B cell (primary cell): ENCODE measurements at regions of chr3 and their contacts with region 1.

Region 1: DNA sequence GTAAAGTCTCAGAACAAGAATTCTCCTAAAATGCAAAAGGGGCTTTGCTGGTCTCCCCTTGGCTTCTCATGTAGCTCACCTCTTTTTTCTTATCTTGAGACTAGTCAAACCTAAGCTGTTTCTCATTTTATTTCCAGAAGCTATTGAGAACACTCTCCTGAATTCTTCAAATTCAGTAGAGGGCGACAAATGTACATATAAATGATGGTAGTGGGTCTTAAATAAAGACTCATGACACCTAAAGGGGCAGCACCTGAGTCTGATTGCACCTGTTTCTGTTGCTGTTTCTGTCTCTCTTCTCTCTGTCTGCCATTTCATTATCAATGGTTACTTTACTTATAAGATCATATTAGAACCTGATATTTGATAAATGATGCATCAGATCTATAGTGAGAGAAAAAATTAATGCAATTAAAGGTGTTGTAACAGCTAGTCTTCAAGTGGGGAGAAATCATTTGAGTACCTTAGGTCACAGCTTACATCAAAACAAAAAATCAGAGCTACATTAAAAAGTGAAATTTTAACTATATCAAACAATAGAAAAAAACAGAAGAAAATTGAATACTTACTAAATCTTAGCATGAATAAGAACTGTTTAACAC is 7.0 kb downstream of the ADIPOQ start:
- DNase-seq: peak; percentile 81
- ATAC-seq: peak; percentile 88
- H3K4me3 ChIP-seq: no peak overlapping the region
- H3K4me3 Mint-ChIP-seq: no peak overlapping the region
- H3K27ac ChIP-seq: no peak overlapping the region
- H3K27ac Mint-ChIP-seq: no peak overlapping the region
- H3K4me1 ChIP-seq: peaks cover 9 to 11% of the 10 kb centered on the region in 2 donors
- H3K4me1 Mint-ChIP-seq: peaks cover 13% of the 10 kb centered on the region
- H3K27me3 ChIP-seq: no peaks in the 10 kb centered on the region
- H3K27me3 Mint-ChIP-seq: peaks cover 16% of the 10 kb centered on the region
- CTCF ChIP-seq: peak; percentile 70

Region 2: GRCh38 chr3:186915806-186916796 is 66.6 kb after region 1 on chr3:
- CTCF ChIA-PET with region 1: interaction called, 12 read pairs
- POLR2A ChIA-PET with region 1: interaction called, 3 read pairs
- intact Hi-C with region 1: no loop called
- DNase-seq: peak; percentile 36
- ATAC-seq: peak; percentile 79
- H3K4me3 ChIP-seq: peak overlapping the region in 1 of 5 experiments; percentile 18
- H3K4me3 Mint-ChIP-seq: peak overlapping the region; percentile 64
- H3K27ac ChIP-seq: no peak overlapping the region
- H3K27ac Mint-ChIP-seq: peak overlapping the region; percentile 77
- H3K4me1 ChIP-seq: peaks cover 11 to 14% of the 10 kb centered on the region in 2 donors
- H3K4me1 Mint-ChIP-seq: peaks cover 33% of the 10 kb centered on the region
- H3K27me3 ChIP-seq: no peaks in the 10 kb centered on the region
- H3K27me3 Mint-ChIP-seq: no peaks in the 10 kb centered on the region
- CTCF ChIP-seq: no peak

Region 3: DNA sequence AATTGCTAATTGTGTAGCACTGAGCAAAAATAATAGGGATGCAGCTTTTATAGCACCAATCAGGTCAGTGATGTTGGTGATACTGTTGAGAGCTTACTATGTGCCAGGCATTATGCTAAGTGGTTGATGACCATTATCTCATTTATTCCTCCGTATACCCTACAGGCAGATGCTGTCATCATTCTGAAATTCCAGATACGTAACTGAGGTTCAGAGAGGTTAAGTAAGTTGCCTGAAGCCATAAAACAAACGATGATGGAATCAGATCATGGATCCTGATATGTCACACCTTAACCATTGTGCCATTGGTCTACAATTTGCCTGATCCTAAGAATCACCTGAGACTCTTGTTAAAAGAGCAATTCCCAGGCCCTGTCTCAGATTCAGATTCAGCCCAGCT is 130.4 kb after region 1 on chr3:
- CTCF ChIA-PET with region 1: interaction called, 10 read pairs
- POLR2A ChIA-PET with region 1: no interaction called
- intact Hi-C with region 1: no loop called
- DNase-seq: no peak
- ATAC-seq: no peak
- H3K4me3 ChIP-seq: no peak overlapping the region
- H3K4me3 Mint-ChIP-seq: no peak overlapping the region
- H3K27ac ChIP-seq: peak overlapping the region in 1 of 2 donors; percentile 34
- H3K27ac Mint-ChIP-seq: peak overlapping the region; percentile 81
- H3K4me1 ChIP-seq: peaks cover 19 to 40% of the 10 kb centered on the region in 2 donors
- H3K4me1 Mint-ChIP-seq: peaks cover 63% of the 10 kb centered on the region
- H3K27me3 ChIP-seq: no peaks in the 10 kb centered on the region
- H3K27me3 Mint-ChIP-seq: no peaks in the 10 kb centered on the region
- CTCF ChIP-seq: no peak

Region 4: DNA sequence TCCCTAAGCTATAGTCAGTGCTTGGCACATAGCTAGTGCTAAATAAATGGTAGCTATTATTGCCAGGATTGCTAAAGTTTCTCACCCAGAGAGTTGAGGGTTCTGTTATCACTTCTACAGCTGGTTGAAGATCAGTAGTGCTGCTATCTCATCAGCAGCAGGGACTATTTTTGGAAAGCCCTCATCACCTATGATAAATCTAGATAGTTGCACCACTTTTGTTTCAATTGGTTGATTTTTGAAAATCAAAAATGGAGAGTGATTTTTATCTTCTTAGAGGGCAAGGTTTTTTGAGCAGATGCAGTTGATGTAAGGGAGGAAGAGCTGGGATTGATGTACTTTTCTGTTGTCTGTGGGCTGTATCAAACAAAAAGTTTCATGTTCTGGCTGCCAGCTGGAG is 182.5 kb after region 1 on chr3:
- CTCF ChIA-PET with region 1: interaction called, 22 read pairs
- POLR2A ChIA-PET with region 1: interaction called, 3 read pairs
- intact Hi-C with region 1: no loop called
- DNase-seq: no peak
- ATAC-seq: no peak
- H3K4me3 ChIP-seq: peak overlapping the region in 2 of 5 experiments; percentile 5 to 20
- H3K4me3 Mint-ChIP-seq: peak overlapping the region; percentile 80
- H3K27ac ChIP-seq: peak overlapping the region; percentile 72 to 84
- H3K27ac Mint-ChIP-seq: peak overlapping the region; percentile 84
- H3K4me1 ChIP-seq: peaks cover 61 to 66% of the 10 kb centered on the region in 2 donors
- H3K4me1 Mint-ChIP-seq: peaks cover 86% of the 10 kb centered on the region
- H3K27me3 ChIP-seq: no peaks in the 10 kb centered on the region
- H3K27me3 Mint-ChIP-seq: no peaks in the 10 kb centered on the region
- CTCF ChIP-seq: no peak

Region 5: DNA sequence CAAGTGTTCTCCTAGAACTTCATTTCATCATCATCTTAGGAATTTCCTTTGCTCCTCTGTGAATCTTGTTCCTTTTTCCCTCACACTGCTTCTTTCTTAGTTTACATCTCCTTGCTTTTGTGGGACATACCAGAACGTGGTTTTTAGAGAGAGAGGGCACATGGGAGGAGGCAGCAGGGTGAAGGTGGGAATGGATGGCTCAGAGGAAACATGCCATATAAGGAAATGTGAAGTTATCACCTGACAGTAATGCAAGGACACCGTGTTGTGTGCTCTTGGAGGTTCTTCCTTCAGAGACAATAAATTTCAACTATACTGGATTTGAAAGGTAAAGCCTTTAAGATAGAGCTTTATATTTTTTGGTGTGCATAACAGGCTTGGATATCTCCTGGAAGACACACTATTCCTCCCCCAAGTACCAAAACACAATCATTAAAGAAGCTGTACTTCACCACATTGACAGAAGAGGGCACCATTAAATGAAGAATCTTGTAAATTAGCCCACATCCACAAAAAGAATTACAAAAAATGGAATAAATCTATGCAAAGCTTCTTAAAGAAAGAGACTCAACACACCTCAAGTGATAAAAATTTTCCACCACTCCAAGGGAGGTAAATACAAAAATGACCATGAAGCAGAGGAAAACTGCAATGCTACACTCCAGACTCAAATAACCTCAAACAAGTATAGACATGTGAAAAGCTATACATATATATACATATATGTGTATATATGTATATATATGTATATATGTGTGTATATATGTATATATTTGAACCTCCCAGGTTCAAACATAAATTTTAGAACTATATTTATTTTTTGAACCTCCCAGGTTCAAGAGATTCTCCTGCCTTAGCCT is 263.7 kb after region 1 on chr3:
- CTCF ChIA-PET with region 1: interaction called, 70 read pairs
- POLR2A ChIA-PET with region 1: no interaction called
- intact Hi-C with region 1: loop called (anchors 1 kb)
- DNase-seq: peak; percentile 69
- ATAC-seq: peak; percentile 45
- H3K4me3 ChIP-seq: no peak overlapping the region
- H3K4me3 Mint-ChIP-seq: no peak overlapping the region
- H3K27ac ChIP-seq: no peak overlapping the region
- H3K27ac Mint-ChIP-seq: peak overlapping the region; percentile 42
- H3K4me1 ChIP-seq: peaks cover 3 to 5% of the 10 kb centered on the region in 2 donors
- H3K4me1 Mint-ChIP-seq: peaks cover 6% of the 10 kb centered on the region
- H3K27me3 ChIP-seq: no peaks in the 10 kb centered on the region
- H3K27me3 Mint-ChIP-seq: no peaks in the 10 kb centered on the region
- CTCF ChIP-seq: peak; percentile 88

Region 6: DNA sequence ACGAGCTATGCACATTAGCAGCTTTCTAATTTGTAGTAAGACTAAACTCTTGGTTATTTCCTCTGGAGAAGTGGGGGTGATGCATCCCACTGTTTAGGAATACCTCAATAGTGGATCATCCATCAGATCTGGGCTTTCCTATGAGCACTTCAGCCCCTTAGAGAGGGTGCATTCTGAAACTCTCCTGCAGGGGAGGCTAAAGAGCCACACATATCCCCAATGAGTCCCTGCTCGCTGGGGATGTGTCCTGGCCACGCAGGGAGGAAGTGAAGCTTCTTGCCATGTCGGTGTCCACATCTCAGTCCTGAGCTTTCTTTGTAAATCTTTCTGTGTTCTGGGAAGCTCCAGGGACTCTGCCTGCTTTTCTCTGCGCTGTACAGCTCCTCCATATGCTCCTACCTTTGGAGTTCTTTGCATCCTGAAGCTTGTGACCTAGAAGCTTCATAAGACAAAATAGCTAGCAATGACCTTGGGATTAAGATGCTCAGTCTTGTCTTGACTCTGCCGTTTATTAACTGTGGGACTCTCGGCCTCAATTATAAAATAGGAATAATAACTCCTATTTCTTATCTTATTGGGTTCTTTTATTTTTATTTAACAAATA is 470.3 kb after region 1 on chr3:
- CTCF ChIA-PET with region 1: interaction called, 10 read pairs
- POLR2A ChIA-PET with region 1: no interaction called
- intact Hi-C with region 1: no loop called
- DNase-seq: peak; percentile 61
- ATAC-seq: peak; percentile 64
- H3K4me3 ChIP-seq: no peak overlapping the region
- H3K4me3 Mint-ChIP-seq: no peak overlapping the region
- H3K27ac ChIP-seq: no peak overlapping the region
- H3K27ac Mint-ChIP-seq: no peak overlapping the region
- H3K4me1 ChIP-seq: peaks cover 6% of the 10 kb centered on the region in 2 donors
- H3K4me1 Mint-ChIP-seq: peaks cover 8% of the 10 kb centered on the region
- H3K27me3 ChIP-seq: peaks cover 0 to 40% (median 21%) of the 10 kb centered on the region in 4 experiments
- H3K27me3 Mint-ChIP-seq: peaks cover 58% of the 10 kb centered on the region
- CTCF ChIP-seq: peak; percentile 73